Caco-2 (cell line): ENCODE measurements at regions of chr11 and their contacts with region 1.

Region 1: DNA sequence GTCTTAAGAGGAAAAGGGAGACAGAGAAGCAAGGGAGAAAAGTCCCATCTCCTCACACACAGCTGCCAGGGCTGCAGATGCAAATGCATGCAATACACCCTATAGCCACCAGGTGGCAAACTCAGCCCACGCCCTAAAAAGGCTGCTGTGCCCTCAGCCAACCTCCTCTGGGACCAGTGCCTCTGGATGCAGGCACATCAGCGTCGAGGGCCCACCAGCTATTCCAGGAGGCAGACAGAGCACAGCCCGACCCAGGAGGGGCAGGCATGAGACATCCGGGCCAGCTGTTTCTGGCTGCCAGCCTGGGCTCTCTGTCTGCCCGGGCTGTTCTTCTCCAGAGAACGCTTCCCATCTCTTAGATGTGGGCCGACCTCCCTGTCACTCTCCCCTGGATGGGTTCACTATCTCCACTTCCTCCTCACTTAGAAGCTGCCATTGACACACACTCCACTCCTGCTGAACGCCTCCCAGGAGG is 39.7 kb downstream of the TPBGL start:
- DNase-seq: peak; percentile 86 to 92
- H3K4me3 ChIP-seq: no peak overlapping the region
- H3K4me3 Mint-ChIP-seq: no peak overlapping the region
- H3K27ac Mint-ChIP-seq: peak overlapping the region; percentile 88
- H3K4me1 ChIP-seq: peaks cover 34% of the 10 kb centered on the region
- H3K4me1 Mint-ChIP-seq: peaks cover 32% of the 10 kb centered on the region
- H3K27me3 ChIP-seq: no peaks in the 10 kb centered on the region
- H3K27me3 Mint-ChIP-seq: no peaks in the 10 kb centered on the region
- CTCF ChIP-seq: peak; percentile 99

Region 2: DNA sequence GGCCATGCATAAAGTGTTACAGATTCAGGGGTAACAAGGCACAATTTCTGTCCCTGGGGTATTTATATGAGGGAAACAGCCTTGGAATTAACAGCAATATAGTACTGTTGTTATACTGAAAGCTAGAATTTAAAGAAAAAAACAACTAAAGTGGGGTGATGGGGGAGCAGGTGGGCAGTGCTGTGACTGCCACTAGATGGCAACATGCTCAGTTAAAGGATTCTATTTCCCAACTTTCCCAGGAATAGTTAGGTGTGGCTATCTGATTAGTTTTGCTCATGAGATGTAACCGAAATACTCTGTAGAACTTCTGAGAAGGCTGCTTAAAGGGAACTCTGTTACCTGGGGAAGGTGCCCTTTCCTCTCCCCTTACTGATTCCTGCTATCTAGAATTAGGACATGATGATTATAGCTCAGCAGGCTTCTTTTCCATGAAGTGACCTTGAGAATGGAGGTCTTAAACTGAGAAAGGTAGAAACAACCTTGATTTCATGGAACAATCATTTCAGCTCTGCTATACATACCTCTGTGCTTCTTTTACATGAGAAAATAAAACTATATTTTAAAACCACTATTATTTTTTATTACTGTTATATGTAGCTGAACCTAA is 1801.4 kb before region 1 on chr11:
- CTCF ChIA-PET with region 1: no interaction called
- POLR2A ChIA-PET with region 1: no interaction called
- intact Hi-C with region 1: no loop called
- DNase-seq: peak in 1 of 2 experiments; percentile 63
- H3K4me3 ChIP-seq: no peak overlapping the region
- H3K4me3 Mint-ChIP-seq: no peak overlapping the region
- H3K27ac Mint-ChIP-seq: no peak overlapping the region
- H3K4me1 ChIP-seq: peaks cover 5% of the 10 kb centered on the region; the same call in 1 of the 2 replicates
- H3K4me1 Mint-ChIP-seq: peaks cover 6% of the 10 kb centered on the region
- H3K27me3 ChIP-seq: no peaks in the 10 kb centered on the region
- H3K27me3 Mint-ChIP-seq: no peaks in the 10 kb centered on the region
- CTCF ChIP-seq: peak; percentile 95 to 98

Region 3: DNA sequence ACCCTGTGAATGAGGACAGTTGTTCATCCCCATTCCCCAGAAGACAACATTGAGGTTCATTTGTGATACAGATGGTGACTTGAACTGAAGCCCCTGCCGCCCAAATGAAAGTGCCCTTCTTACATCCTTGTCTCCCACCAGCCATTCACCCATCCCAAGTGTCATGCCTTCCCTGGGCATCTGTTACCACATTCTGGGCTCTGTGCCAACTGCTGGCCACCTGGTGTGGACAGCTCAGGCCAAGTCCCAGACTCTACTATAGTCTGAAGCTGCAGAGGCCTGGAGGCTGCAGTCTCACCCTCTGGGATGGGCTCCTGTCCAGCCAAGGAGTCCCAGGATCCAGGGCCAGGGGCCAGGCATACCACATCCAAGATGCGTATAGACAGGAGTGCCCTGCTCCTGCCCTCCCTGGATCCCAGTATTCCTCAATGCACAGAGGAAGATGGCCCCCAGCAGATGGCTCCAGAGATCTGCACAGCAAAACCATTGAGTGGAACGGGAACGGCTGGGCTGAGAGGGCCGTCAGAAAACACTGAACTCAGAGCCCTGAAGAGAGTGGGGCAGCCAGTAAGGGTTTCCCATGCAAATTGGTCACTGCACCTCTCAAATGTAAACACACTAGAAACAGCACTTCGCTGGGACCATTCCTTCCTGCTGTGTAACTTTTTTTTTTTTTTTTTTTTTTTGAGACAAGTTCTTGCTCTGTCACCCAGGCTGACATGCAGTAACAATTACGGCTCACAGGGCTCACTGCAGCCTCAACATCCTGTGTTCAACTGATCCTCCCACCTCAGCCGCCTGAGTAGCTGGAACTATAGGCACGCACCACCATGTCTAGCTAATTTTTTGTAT is 48.4 kb after region 1 on chr11:
- CTCF ChIA-PET with region 1: interaction called, 11 read pairs
- POLR2A ChIA-PET with region 1: no interaction called
- intact Hi-C with region 1: loop called (anchors 1 kb)
- DNase-seq: peak; percentile 91 to 92
- H3K4me3 ChIP-seq: no peak overlapping the region
- H3K4me3 Mint-ChIP-seq: no peak overlapping the region
- H3K27ac Mint-ChIP-seq: peak overlapping the region; percentile 8
- H3K4me1 ChIP-seq: peaks cover 41% of the 10 kb centered on the region
- H3K4me1 Mint-ChIP-seq: peaks cover 64% of the 10 kb centered on the region
- H3K27me3 ChIP-seq: no peaks in the 10 kb centered on the region
- H3K27me3 Mint-ChIP-seq: no peaks in the 10 kb centered on the region
- CTCF ChIP-seq: peak; percentile 90 to 98

Region 4: DNA sequence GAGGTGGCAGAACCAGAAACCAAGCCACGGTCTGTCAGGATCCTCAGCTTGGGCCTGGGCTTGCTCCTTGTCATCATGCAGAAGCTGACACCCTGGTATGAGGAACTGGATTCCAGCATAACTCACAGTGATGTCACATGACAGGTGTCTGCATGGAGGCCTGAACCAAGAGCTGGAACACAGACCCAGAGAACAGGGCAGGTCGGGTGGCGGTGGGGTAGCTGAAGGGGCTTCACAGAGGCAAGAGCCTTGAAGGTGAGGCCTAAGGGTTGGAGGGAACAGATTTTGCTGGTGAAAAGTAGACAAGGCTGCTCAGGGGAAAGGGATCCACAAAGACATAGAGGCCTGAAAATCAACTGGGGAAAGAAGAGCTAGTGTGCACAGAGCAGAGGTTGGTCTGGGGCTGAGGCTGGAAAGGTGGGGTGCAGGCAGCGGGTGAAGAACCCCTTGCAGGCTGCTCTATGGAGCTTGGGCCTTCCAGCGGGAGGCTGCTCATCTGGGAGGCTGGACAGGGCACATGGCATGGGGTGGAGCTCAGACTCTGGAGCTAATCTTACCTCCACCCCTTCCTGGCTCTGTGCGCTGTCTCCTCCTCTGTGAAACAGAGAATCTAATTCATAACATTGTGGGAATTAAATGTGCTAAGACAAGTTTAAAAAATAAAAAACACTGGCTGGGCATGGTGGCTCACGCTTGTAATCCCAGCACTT is 100.6 kb after region 1 on chr11:
- CTCF ChIA-PET with region 1: interaction called, 31 read pairs
- POLR2A ChIA-PET with region 1: no interaction called
- intact Hi-C with region 1: loop called (anchors 1 kb)
- DNase-seq: peak; percentile 85 to 90
- H3K4me3 ChIP-seq: no peak overlapping the region
- H3K4me3 Mint-ChIP-seq: peak overlapping the region; percentile 66
- H3K27ac Mint-ChIP-seq: peak overlapping the region; percentile 97
- H3K4me1 ChIP-seq: peaks cover 57% of the 10 kb centered on the region
- H3K4me1 Mint-ChIP-seq: peaks cover 39% of the 10 kb centered on the region
- H3K27me3 ChIP-seq: no peaks in the 10 kb centered on the region
- H3K27me3 Mint-ChIP-seq: no peaks in the 10 kb centered on the region
- CTCF ChIP-seq: no peak